T-cell (primary cell): ENCODE measurements at regions of chr4 and their contacts with region 1.

Region 1: DNA sequence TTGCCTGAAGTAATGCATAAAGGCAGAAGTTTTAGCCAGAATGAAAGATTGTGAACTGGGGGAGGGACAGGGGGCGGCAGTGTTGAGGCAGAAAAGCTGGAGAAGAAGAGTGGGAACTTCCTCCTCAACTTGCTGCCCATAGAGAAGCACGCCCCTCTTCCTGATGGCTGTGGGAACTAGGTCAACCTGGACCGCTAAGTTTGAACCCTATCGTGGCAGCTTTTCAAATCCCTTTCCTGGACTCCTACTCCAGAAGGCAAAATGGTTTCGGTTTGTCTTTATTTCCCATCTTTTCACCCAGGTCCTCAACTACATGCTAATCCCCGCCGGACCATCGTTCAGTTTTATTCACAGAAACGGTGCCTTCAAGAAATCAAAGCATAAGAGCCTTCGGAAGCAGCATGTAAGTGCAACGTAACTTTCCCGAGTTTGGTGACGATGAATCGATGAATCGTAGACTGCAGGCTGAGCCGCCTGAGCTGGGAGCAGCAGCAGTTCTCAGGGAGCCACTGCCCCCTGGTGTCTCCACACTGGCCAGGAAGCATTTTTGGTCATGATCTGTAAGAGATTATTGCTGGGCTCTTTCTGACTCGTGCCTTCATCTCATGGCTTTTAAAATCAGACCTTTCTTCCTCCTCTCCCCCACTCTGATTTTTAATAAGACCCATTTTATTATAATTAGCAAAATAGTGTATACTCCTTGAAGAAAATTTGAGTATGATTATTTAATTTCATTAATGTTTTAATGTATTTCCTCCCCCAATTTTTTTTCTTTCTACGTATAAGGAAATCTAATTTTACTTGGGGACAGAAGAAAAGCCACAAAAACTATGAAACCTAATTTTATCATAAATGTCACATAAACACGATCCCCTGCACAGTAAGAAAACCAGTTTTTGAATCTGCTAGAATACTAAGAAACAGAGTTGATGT is 21.4 kb downstream of the SPINK2 start:
- DNase-seq: peak; percentile 65 to 90 (median 79)
- ATAC-seq: peak; percentile 97 to 98 (median 98)
- H3K4me3 ChIP-seq: peak overlapping the region; percentile 69 to 92
- H3K4me3 Mint-ChIP-seq: peak overlapping the region; percentile 92 to 97 (median 95)
- H3K27ac ChIP-seq: peak overlapping the region; percentile 61
- H3K27ac Mint-ChIP-seq: peak overlapping the region; percentile 82 to 95
- H3K4me1 ChIP-seq: peaks cover 8 to 13% of the 10 kb centered on the region in 2 experiments
- H3K4me1 Mint-ChIP-seq: peaks cover 21 to 28% (median 22%) of the 10 kb centered on the region in 3 donors
- H3K27me3 ChIP-seq: no peaks in the 10 kb centered on the region
- H3K27me3 Mint-ChIP-seq: no peaks in the 10 kb centered on the region

Region 2: GRCh38 chr4:56575820-56576429 is 224.2 kb before region 1 on chr4:
- CTCF ChIA-PET with region 1: interaction called, 5 to 18 read pairs
- POLR2A ChIA-PET with region 1: no interaction called
- DNase-seq: peak in 1 of 35 experiments; percentile 46
- ATAC-seq: no peak
- H3K4me3 ChIP-seq: no peak overlapping the region
- H3K4me3 Mint-ChIP-seq: no peak overlapping the region
- H3K27ac ChIP-seq: no peak overlapping the region
- H3K27ac Mint-ChIP-seq: no peak overlapping the region
- H3K4me1 ChIP-seq: no peaks in the 10 kb centered on the region
- H3K4me1 Mint-ChIP-seq: peaks cover 0 to 3% (median 0%) of the 10 kb centered on the region in 3 donors
- H3K27me3 ChIP-seq: peaks cover 0 to 4% of the 10 kb centered on the region in 2 experiments
- H3K27me3 Mint-ChIP-seq: peaks cover 0 to 4% of the 10 kb centered on the region in 2 donors

Region 3: GRCh38 chr4:56757821-56758411 is 42.2 kb before region 1 on chr4:
- CTCF ChIA-PET with region 1: interaction called, 4 to 10 read pairs
- POLR2A ChIA-PET with region 1: interaction called in 1 of 2 experiments, 5 read pairs
- DNase-seq: peak; percentile 11 to 72 (median 42)
- ATAC-seq: peak; percentile 82 to 89 (median 88)
- H3K4me3 ChIP-seq: peak overlapping the region; percentile 32 to 39
- H3K4me3 Mint-ChIP-seq: peak overlapping the region; percentile 72 to 81 (median 72)
- H3K27ac ChIP-seq: peak overlapping the region; percentile 76
- H3K27ac Mint-ChIP-seq: peak overlapping the region; percentile 96 to 99
- H3K4me1 ChIP-seq: peaks cover 26 to 34% of the 10 kb centered on the region in 2 experiments
- H3K4me1 Mint-ChIP-seq: peaks cover 57 to 72% (median 57%) of the 10 kb centered on the region in 3 donors
- H3K27me3 ChIP-seq: no peaks in the 10 kb centered on the region
- H3K27me3 Mint-ChIP-seq: no peaks in the 10 kb centered on the region

Region 4: DNA sequence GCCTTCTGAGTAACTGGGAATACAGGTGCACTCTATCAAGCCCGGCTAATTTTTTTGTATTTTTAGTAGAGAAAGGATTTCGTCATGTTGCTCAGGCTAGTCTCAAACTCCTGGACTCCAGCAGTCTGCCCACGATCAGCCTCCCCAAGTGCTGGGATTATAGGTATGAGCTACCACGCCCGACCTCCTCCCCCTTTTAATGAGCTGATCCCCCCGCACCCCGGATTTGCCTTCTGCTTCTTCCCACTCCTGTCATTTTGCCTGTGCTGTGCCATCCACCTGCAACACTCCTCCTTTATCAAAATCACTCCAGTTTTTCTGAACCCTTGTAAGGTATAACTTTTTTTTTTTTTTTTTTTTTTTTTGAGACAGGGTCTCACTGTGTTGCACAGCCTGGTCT is 12.0 kb before region 1 on chr4:
- CTCF ChIA-PET with region 1: no interaction called
- POLR2A ChIA-PET with region 1: interaction called in 1 of 2 experiments, 13 read pairs
- DNase-seq: no peak
- ATAC-seq: no peak
- H3K4me3 ChIP-seq: no peak overlapping the region
- H3K4me3 Mint-ChIP-seq: no peak overlapping the region
- H3K27ac ChIP-seq: no peak overlapping the region
- H3K27ac Mint-ChIP-seq: no peak overlapping the region
- H3K4me1 ChIP-seq: no peaks in the 10 kb centered on the region
- H3K4me1 Mint-ChIP-seq: no peaks in the 10 kb centered on the region
- H3K27me3 ChIP-seq: no peaks in the 10 kb centered on the region
- H3K27me3 Mint-ChIP-seq: no peaks in the 10 kb centered on the region